Pancreas (tissue), 10 donors: ENCODE measurements at regions of chr2 and their contacts with region 1.

Region 1: DNA sequence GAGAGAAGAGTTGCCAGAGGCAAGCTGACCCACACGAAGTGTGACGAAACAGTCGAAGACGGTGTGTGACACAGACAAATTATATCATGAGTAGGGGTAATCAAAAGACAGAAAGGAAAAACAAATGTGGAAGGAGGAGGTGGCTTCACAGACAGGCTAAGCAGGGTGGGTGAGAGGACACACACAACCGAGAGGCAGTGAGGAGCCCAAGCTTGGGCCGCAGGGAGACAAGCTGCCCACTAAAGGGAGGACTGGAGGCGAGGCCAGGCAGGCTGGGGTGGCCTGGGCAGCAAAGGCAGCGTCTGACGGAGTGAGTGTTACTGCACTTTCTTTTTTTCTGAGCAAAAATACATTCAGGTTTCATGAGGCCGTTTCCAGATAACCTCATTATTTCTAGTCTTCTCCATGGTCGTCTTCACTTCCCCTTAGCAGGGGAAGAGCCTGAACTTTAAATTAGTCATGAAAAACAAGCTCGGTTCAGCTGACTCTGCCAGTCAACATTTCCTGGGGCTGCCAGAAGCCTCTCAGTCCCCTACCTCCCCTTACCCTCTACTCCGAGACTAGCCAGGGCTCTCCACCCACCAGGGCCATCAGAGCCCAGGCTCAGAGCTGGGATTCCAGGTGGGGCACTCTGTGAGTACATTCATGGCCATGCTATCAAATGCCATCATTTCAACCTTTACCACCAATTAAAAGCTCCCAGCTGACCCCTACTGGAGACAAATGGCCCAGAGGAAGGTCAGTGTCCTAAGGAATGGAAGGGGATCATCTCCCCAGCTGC is 13.8 kb upstream of the ZFP36L2 start:
- DNase-seq: no peak
- ATAC-seq: peak in 3 of 4 donors; percentile 32 to 57 (median 42)
- H3K4me3 ChIP-seq: no peak overlapping the region
- H3K27ac ChIP-seq: peak overlapping the region in 2 of 4 donors; percentile 47 to 57
- H3K4me1 ChIP-seq: peaks cover 0 to 4% (median 0%) of the 10 kb centered on the region in 3 donors
- H3K27me3 ChIP-seq: no peaks in the 10 kb centered on the region
- CTCF ChIP-seq: no peak

Region 2: DNA sequence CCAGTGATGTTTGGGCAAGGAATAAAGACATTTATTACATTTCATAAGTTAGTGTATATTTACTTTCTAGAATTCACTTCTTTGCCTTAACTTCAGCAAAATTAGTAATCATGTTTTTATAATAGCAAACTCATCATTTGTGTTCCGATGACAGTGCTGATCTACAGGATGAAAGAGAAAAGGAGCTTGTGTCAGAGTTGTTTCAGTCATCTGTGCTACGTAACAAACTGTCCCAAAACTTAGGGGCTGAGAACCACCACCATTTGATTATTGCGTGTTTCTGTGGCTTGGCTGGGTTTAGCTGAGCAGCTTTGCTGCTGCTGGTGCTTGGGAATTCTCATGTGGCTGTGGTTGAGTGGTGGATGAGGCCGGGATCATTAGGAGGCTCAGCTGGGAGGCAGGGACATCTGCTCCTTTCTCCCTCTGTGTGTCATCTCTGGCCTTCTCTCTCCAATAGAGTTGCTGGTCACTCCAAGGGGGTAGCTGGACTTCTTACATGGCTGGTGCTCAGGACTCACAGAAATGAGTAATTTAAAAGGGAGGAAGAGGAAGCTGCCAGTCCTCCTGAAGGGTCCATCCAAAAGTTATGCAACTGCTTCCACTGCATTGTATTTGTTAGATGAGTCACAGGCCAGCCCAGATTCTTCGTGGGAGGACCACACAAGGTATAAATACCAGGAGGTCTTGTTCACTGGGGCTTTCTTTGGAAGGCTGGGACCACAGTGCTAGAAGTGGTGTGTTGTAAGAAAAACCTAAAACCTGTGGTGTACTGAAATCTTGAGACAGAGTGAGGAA is 404.4 kb before region 1 on chr2:
- intact Hi-C with region 1: loop called in 2 of 3 experiments (anchors 10 kb)
- DNase-seq: no peak
- ATAC-seq: peak in 3 of 4 donors; percentile 44 to 68 (median 59)
- H3K4me3 ChIP-seq: no peak overlapping the region
- H3K27ac ChIP-seq: no peak overlapping the region
- H3K4me1 ChIP-seq: no peaks in the 10 kb centered on the region
- H3K27me3 ChIP-seq: no peaks in the 10 kb centered on the region
- CTCF ChIP-seq: no peak

Region 3: DNA sequence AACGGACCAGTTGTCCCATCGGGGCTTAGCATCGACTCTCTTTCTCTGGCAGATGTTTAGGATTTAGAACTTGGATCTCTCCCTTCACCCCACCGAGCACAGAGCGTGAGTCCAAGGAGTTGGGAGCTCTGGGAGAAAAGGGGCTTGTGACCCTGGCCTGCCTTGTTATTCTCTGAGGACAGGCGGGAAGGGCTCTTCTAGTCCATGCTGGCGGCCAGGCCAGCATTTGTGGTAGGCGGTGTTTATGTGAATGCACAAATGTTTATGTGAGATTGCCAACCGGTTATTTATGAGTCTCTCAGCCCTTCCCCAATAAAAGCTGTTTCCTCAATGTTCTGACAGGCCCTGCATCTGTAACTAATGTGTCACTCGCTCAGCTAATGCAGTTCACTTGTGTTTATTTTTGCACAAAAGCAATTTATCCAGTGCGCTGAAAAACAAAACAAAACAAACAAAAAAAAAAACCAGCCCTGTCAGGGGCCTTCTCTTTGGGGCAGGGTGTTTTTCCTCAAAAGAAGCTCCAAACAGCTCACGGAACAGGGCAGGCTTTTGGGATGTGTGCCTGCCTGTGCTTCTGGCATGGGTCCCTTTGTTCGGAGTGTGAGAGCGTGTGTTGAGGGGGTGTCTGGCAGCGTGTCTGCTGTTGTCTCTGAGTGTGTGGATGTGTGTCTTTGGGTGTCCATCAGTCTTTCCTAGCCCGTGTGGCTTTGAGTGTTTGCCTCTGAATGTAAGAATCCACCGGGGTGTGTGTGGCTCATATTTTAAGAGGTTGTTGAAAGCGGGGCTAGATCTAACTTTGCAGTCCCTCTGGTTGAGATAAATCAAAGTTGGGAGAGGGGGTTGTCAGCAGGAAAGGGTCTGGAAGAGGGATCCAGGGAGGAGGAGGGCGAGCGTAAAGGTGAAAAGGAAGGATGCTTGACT is 395.0 kb before region 1 on chr2:
- intact Hi-C with region 1: loop called in 1 of 3 experiments (anchors 10 kb)
- DNase-seq: no peak
- ATAC-seq: peak in 2 of 4 donors; percentile 17
- H3K4me3 ChIP-seq: no peak overlapping the region
- H3K27ac ChIP-seq: no peak overlapping the region
- H3K4me1 ChIP-seq: no peaks in the 10 kb centered on the region
- H3K27me3 ChIP-seq: no peaks in the 10 kb centered on the region
- CTCF ChIP-seq: no peak

Region 4: DNA sequence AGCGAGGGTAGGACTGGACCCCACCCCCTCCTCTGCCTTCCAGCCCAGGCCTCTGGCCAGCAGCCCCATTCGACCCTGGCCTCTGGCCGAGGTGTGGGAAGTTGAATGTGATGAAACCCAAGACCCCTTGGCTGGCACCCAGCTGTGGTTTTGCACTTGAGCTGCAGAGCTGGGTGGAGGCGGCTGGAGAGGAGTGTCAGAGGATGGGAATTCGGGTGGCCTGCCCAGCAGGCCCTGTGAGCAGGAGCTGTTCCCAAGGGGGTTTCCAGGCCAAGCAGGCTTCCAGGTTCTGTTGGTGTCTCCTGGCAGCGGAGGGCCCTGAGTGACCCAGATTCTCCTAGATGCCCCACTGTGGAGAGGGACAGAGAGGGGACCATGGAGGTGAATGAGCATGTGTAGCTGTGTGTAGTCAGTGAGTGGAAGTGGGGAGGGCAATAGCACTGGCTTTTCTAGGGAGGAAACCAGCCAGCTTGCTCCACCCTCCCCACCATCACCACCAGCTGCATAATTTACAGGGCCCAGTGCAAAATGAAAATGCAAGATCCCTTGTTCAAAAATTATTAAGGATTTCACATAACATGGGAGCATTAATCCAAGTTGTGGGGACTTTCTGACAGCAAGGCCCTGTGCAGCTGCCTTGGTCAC is 275.6 kb before region 1 on chr2:
- intact Hi-C with region 1: no loop called
- DNase-seq: peak in 3 of 6 donors; percentile 36 to 44 (median 44)
- ATAC-seq: peak in 3 of 4 donors; percentile 33 to 66 (median 36)
- H3K4me3 ChIP-seq: no peak overlapping the region
- H3K27ac ChIP-seq: peak overlapping the region in 1 of 4 donors; percentile 48
- H3K4me1 ChIP-seq: peaks cover 0 to 6% (median 0%) of the 10 kb centered on the region in 3 donors
- H3K27me3 ChIP-seq: no peaks in the 10 kb centered on the region
- CTCF ChIP-seq: no peak

Region 5: GRCh38 chr2:43194121-43194869 is 45.9 kb before region 1 on chr2:
- intact Hi-C with region 1: no loop called
- DNase-seq: peak; percentile 71 to 88 (median 85)
- ATAC-seq: peak; percentile 88 to 95 (median 92)
- H3K4me3 ChIP-seq: peak overlapping the region in 2 of 4 donors; percentile 4 to 13
- H3K27ac ChIP-seq: peak overlapping the region; percentile 78 to 97 (median 90)
- H3K4me1 ChIP-seq: peaks cover 27 to 33% (median 28%) of the 10 kb centered on the region in 3 donors
- H3K27me3 ChIP-seq: no peaks in the 10 kb centered on the region
- CTCF ChIP-seq: no peak

Region 6: DNA sequence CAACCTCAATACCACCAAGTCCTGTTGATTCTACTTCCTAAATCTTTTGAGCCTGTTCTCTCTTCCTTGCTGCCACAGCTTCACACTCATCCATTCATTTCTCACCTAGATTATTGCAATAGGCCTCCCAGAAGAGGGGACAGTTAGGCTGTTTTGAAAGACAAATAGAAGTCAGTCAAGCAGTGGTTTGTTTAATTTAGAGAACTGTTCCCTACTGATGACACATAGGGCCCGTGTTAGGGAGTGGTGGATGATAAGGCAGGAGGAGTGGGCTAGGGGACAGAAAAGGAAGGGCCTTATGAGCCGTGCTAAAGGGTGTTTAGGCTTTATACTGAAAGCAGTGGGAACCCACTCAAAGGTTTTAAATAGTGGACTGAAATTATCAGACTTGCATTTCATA is 45.8 kb after region 1 on chr2:
- intact Hi-C with region 1: loop called in 1 of 3 experiments (anchors 2 kb)
- DNase-seq: no peak
- ATAC-seq: no peak
- H3K4me3 ChIP-seq: no peak overlapping the region
- H3K27ac ChIP-seq: no peak overlapping the region
- H3K4me1 ChIP-seq: peaks cover 0 to 3% (median 0%) of the 10 kb centered on the region in 3 donors
- H3K27me3 ChIP-seq: no peaks in the 10 kb centered on the region
- CTCF ChIP-seq: no peak

Region 7: DNA sequence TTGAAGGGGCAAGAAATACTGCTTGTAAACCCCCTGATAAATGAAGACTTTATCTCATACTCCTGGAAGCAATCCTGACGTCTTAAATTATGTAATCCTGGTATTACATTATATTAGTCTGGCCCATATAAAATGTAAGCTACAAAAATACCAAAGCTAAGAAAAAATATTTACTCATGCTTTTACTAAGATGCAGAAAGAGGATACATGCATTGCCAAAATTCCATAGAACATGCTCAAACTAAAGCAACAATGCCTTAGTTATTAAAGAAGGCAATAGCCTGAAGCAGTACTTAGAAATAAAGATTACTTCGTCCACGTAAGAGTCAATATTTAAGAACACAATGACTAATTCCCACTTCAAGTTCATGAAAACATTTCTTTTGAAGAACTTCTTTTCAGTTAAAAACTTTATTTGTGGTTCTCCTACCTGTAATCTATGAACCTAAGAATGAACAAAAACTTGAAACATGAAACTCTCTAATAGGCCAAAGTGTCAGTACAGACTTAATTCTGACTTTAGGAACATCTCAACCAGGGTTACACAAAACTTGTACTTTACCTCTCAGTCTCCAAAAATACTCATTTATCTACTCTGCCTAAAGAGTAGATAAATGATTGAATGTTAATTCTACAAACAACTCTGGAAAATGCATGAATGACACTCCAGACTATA is 238.4 kb after region 1 on chr2:
- intact Hi-C with region 1: loop called in 2 of 3 experiments (anchors 10 kb)
- DNase-seq: no peak
- ATAC-seq: no peak
- H3K4me3 ChIP-seq: no peak overlapping the region
- H3K27ac ChIP-seq: no peak overlapping the region
- H3K4me1 ChIP-seq: peaks cover 0 to 11% (median 6%) of the 10 kb centered on the region in 3 donors
- H3K27me3 ChIP-seq: no peaks in the 10 kb centered on the region
- CTCF ChIP-seq: no peak

Region 8: DNA sequence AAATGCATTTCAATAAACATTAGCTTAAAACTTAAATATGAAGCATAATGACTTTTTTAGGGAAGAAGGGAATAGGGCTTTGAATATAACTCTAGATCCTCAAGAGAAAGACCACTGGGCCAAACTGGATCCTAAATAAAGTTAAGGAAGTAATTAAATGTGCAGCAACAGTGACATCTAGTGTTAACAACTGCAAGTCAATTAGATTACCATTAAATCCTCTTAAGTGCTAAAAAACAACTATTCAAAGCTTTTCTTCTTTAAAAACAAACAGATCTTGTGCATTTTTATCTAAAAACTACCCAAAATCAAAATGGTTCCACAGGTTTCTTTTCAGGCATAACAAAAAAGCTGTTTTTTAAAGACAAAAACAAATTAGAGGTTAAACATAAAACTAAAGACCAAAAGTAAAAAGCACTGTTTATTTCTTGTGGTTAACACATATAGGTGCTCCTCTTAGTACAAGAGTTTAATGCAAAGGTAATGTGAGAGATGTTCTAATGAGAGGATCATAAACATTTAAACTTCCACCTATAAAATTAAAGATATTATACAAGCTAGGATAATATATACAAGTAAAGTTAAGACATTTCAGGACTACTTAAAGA is 244.3 kb after region 1 on chr2:
- intact Hi-C with region 1: loop called in 2 of 3 experiments (anchors 10 kb)
- DNase-seq: no peak
- ATAC-seq: peak in 3 of 4 donors; percentile 78 to 83 (median 81)
- H3K4me3 ChIP-seq: no peak overlapping the region
- H3K27ac ChIP-seq: no peak overlapping the region
- H3K4me1 ChIP-seq: peaks cover 0 to 18% (median 12%) of the 10 kb centered on the region in 3 donors
- H3K27me3 ChIP-seq: no peaks in the 10 kb centered on the region
- CTCF ChIP-seq: peak in 3 of 4 donors; percentile 28 to 58 (median 47)